Dorsolateral prefrontal cortex (tissue), 120 donors: ENCODE measurements at regions of chr1 and their contacts with region 1.

Region 1: GRCh38 chr1:161192476-161193465 is 6.1 kb downstream of the ADAMTS4 start:
- DNase-seq: peak in 7 of 10 donors; percentile 60 to 75 (median 70)
- H3K4me3 ChIP-seq: peak overlapping the region in 12 of 59 donors; percentile 3 to 98 (median 51)
- H3K27ac ChIP-seq: peak overlapping the region in 57 of 59 donors; percentile 23 to 100 (median 88)
- H3K27me3 ChIP-seq: no peaks in the 10 kb centered on the region
- CTCF ChIP-seq: peak; percentile 65 to 94 (median 86)

Region 2: GRCh38 chr1:161139765-161140164 is 53.0 kb before region 1 on chr1:
- intact Hi-C with region 1: no loop called
- DNase-seq: no peak
- H3K4me3 ChIP-seq: no peak overlapping the region
- H3K27ac ChIP-seq: peak overlapping the region in 2 of 59 donors; percentile 1 to 8
- H3K27me3 ChIP-seq: no peaks in the 10 kb centered on the region
- CTCF ChIP-seq: peak in 54 of 56 donors; percentile 19 to 70 (median 46)

Region 3: GRCh38 chr1:161209790-161210409 is 17.1 kb after region 1 on chr1:
- intact Hi-C with region 1: loop called in 1 of 2 experiments (anchors 1 kb)
- DNase-seq: peak in 8 of 10 donors; percentile 65 to 83 (median 78)
- H3K4me3 ChIP-seq: peak overlapping the region in 1 of 59 donors; percentile 8
- H3K27ac ChIP-seq: peak overlapping the region in 37 of 59 donors; percentile 1 to 74 (median 37)
- H3K27me3 ChIP-seq: no peaks in the 10 kb centered on the region
- CTCF ChIP-seq: peak; percentile 73 to 96 (median 88)

Region 4: DNA sequence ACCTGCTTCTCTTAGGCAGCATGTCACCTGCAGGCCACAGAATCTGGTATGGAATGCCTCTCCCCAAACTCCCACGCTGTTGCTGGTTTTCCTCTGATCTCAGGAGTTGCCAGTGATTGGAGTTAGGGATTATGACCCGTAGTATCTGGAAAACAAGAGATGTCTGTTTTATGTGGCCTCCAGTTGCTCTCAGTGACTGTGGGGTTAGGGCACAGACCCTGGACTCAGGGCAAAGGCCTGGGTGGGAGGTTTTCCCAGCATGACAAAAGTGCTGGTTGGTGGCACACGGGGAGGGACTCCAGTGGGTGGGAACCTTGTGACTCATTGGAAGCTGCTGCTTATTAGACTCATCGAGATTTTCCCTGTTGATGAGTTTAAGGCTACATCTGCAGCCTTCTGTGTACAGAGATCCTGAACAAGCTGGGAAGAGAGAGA is 45.3 kb after region 1 on chr1 and contains the start of gene NR1I3:
- intact Hi-C with region 1: no loop called
- DNase-seq: no peak
- H3K4me3 ChIP-seq: no peak within 1 kb of the TSS
- H3K27ac ChIP-seq: no peak within 1 kb of the TSS
- H3K27me3 ChIP-seq: no peaks in the 10 kb centered on the region
- CTCF ChIP-seq: no peak
- total RNA-seq, gene NR1I3: 0.27 to 1.7 (median 0.59) TPM in 8 of 120 experiments, not detected in the others

Region 5: GRCh38 chr1:161250829-161251228 is 58.1 kb after region 1 on chr1:
- intact Hi-C with region 1: no loop called
- DNase-seq: no peak
- H3K4me3 ChIP-seq: no peak overlapping the region
- H3K27ac ChIP-seq: no peak overlapping the region
- H3K27me3 ChIP-seq: no peaks in the 10 kb centered on the region
- CTCF ChIP-seq: no peak

Region 6: GRCh38 chr1:161389691-161390558 is 197.2 kb after region 1 on chr1:
- intact Hi-C with region 1: loop called in 1 of 2 experiments (anchors 10 kb)
- DNase-seq: peak; percentile 95 to 99 (median 97)
- H3K4me3 ChIP-seq: peak overlapping the region; percentile 58 to 96 (median 83)
- H3K27ac ChIP-seq: peak overlapping the region; percentile 58 to 99 (median 94)
- H3K27me3 ChIP-seq: no peaks in the 10 kb centered on the region
- CTCF ChIP-seq: peak in 9 of 56 donors; percentile 1 to 25 (median 15)